ENCODE measurements at regions of chr4 and their contacts with region 1.

Region 1: DNA sequence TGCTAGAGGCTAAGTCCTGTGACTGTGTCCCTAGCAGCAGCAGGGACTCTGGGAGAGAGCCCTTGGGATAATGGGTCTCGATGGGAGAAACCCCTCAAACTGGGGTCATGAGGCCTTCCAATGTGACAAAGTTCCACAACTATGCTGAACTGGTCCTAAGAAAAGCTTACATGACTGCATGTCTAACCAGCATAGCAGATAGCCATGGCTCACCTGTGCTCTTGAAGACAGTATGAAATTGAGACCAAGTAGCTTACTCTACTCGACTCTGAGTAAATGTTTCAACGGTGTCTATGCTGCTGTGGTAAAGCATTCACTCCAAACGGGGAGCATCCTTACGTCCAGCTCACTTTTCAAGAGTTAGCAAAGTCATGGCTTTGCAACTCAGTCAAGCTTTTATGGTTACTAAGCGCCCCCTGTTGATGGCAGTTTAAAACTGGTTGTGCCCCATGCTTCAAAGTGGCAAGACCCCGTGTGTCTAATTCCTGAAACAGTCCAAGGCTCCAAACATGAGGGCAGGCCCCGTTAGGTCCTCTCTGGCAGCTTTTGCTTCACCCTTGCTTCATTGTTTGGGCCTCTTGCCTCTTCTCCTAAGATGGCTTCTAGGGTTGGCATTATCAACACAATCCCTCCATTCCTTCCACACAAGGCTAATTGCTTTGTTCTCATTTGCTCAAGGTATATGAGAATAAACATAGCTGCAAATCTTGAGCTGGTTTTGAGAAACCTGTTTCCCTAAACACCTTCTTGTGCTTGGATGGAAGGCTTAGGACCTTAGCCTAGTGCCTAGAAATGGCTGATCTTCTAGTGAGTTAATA is 46.6 kb downstream of the CCNG2 start:
- DNase-seq: peak; percentile 85
- ATAC-seq: peak; percentile 83
- H3K4me3 ChIP-seq: no peak overlapping the region
- H3K4me3 Mint-ChIP-seq: no peak overlapping the region
- H3K27ac ChIP-seq: no peak overlapping the region
- H3K27ac Mint-ChIP-seq: no peak overlapping the region
- H3K4me1 ChIP-seq: peaks cover 7% of the 10 kb centered on the region in 2 donors
- H3K4me1 Mint-ChIP-seq: peaks cover 9% of the 10 kb centered on the region
- H3K27me3 ChIP-seq: no peaks in the 10 kb centered on the region
- H3K27me3 Mint-ChIP-seq: no peaks in the 10 kb centered on the region
- CTCF ChIP-seq: peak; percentile 93

Region 2: DNA sequence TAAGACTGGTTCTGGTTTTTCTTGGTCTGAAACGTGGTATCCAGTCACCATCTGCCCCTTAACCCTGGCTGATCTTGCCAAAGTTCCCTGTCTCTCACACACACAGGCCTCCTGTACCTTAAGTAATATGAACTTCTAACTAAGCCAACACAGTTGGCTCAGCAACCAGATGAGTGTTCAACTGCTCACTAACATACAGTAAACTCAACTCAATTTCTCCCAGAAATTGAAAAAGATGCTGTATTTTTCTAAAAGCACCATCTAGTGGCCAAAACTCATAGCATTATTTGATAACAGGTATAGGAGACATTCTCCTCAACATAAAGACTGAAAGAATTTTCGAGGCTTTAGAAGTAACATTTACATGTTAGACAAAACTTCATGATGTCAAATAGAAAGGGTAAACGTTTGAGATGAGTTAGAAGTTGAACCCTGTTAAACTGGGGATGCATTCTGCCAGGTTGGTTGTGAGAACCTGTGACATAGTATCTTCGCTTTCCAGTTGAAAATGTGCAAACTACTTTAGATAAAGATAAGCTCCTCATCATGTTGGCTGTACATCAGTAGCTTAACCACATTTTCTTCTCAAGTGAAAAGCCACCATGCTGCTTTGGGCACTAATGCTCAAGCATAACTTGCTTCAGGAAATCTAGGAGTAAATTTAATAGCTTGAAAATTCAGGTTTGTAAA is 159.0 kb before region 1 on chr4:
- CTCF ChIA-PET with region 1: interaction called, 184 read pairs
- POLR2A ChIA-PET with region 1: no interaction called
- intact Hi-C with region 1: no loop called
- DNase-seq: peak; percentile 45
- ATAC-seq: no peak
- H3K4me3 ChIP-seq: no peak overlapping the region
- H3K4me3 Mint-ChIP-seq: no peak overlapping the region
- H3K27ac ChIP-seq: peak overlapping the region in 1 of 2 donors; percentile 22
- H3K27ac Mint-ChIP-seq: peak overlapping the region; percentile 23
- H3K4me1 ChIP-seq: peaks cover 11 to 12% of the 10 kb centered on the region in 2 donors
- H3K4me1 Mint-ChIP-seq: peaks cover 20% of the 10 kb centered on the region
- H3K27me3 ChIP-seq: no peaks in the 10 kb centered on the region
- H3K27me3 Mint-ChIP-seq: no peaks in the 10 kb centered on the region
- CTCF ChIP-seq: peak; percentile 68

Region 3: DNA sequence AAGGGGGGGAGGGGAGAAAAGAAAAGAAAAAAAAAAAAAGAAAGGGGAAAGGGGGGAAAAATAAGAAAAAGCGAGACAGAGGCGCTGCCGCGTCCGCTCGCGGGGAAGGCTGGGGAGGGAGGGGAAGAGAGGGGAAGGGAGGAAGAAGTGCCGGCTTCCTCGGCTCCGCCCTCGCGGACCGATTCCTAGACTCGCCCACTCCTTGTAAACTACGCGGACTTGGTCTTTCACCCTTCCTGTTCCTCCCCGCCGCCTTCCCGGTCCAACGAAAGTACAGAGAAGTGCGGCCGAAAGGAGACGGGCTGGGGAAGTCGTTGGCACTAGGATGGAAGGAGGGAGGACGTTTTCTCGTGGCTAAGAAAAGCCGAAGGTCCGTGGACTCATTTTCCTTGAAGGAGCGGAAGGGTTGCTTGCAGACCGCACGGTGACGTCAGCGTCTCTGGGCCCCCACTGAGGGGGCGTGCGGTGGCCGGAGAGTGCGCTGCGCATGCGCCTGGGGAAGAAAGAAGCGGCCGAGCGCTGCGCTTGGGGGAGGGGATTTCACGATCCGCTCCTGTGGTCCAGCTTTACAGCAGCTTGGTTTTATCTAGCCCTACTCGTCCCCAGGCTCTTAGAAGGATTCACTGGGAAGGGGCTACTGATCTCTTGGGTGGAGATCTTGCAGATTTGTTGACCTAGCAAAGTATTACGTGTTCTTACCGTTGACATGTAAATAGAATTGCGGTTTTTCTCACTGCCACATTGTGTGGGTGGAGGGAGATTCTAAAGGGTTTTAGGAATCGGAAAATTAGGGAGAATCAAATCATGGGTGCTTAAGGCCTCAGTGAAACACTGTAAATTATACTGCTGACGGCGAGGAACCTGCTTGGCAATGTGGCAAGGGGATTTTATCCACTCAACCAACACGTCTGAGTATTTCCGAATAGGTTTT is 127.5 kb before region 1 on chr4 and contains the start of gene CCNI:
- CTCF ChIA-PET with region 1: interaction called, 42 read pairs
- POLR2A ChIA-PET with region 1: interaction called, 3 read pairs
- intact Hi-C with region 1: no loop called
- DNase-seq: peak; percentile 100
- ATAC-seq: peak; percentile 75
- H3K4me3 ChIP-seq: peak within 1 kb of the TSS; percentile 68 to 98 (median 81)
- H3K4me3 Mint-ChIP-seq: no peak within 1 kb of the TSS
- H3K27ac ChIP-seq: peak within 1 kb of the TSS; percentile 97 to 100
- H3K27ac Mint-ChIP-seq: peak within 1 kb of the TSS; percentile 100
- H3K4me1 ChIP-seq: peaks cover 48 to 52% of the 10 kb centered on the region in 2 donors
- H3K4me1 Mint-ChIP-seq: peaks cover 46% of the 10 kb centered on the region
- H3K27me3 ChIP-seq: no peaks in the 10 kb centered on the region
- H3K27me3 Mint-ChIP-seq: no peaks in the 10 kb centered on the region
- CTCF ChIP-seq: no peak
- total RNA-seq, gene CCNI: 314 and 328 TPM in 2 replicates

Region 4: DNA sequence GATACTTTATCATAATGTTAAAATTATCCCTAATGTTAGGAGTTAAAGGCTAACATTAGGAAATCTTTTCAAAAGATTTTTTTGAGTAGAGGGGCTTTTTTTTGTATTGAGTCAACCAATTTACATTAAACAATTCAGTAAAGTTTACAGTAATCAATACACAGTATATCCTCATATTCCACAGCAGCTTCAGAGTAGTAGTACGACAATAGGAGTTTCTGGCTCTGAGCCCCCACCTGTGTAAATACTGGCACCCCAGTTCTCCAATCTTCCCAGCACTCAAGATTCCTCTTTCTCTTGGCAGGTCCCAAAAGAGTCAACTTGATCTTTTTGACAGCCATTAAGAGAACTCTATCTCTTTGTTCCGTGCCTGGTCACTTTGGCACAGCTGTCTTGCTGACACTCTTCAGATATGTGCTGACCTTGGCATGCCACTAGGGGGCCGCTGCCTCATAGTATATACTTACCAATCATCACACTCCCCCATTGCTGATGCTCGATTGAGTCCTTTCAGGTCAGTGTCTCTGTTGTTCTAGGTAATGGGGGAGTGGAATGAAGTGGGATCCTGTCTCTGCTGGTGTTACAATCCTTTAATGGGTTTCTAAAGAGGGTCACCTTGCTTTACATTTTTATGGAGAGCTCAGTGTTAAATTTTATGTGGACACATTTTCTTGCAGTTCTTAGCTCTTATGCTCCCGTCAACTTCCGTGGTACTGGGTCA is 108.3 kb before region 1 on chr4:
- CTCF ChIA-PET with region 1: interaction called, 444 read pairs
- POLR2A ChIA-PET with region 1: interaction called, 3 read pairs
- intact Hi-C with region 1: loop called (anchors 1 kb)
- DNase-seq: peak; percentile 81
- ATAC-seq: peak; percentile 99
- H3K4me3 ChIP-seq: no peak overlapping the region
- H3K4me3 Mint-ChIP-seq: no peak overlapping the region
- H3K27ac ChIP-seq: no peak overlapping the region
- H3K27ac Mint-ChIP-seq: no peak overlapping the region
- H3K4me1 ChIP-seq: peaks cover 21 to 25% of the 10 kb centered on the region in 2 donors
- H3K4me1 Mint-ChIP-seq: peaks cover 23% of the 10 kb centered on the region
- H3K27me3 ChIP-seq: no peaks in the 10 kb centered on the region
- H3K27me3 Mint-ChIP-seq: no peaks in the 10 kb centered on the region
- CTCF ChIP-seq: peak; percentile 95

Region 5: DNA sequence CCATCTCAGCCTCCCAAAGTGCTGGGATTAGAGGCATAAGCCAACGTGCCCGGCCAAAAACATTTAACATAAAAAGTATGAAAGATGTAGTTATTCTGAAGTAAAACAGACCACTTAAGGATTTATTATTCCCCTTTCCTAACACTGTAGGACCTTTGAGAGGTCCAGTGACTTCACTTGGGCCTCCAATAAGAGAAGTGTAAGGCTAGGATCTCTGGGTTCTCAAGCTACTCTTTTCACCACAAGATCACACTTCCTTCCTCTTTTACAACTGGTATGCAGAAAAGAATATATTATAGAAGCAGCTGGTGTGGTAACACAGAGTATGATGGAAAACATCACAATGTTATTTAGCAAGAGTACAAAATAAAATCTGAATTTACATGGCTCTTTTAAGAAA is 76.8 kb before region 1 on chr4:
- CTCF ChIA-PET with region 1: interaction called, 232 read pairs
- POLR2A ChIA-PET with region 1: no interaction called
- intact Hi-C with region 1: no loop called
- DNase-seq: peak; percentile 72
- ATAC-seq: peak; percentile 83
- H3K4me3 ChIP-seq: peak overlapping the region in 1 of 5 experiments; percentile 31
- H3K4me3 Mint-ChIP-seq: peak overlapping the region; percentile 59
- H3K27ac ChIP-seq: peak overlapping the region; percentile 81 to 90
- H3K27ac Mint-ChIP-seq: peak overlapping the region; percentile 96
- H3K4me1 ChIP-seq: peaks cover 52 to 66% of the 10 kb centered on the region in 2 donors
- H3K4me1 Mint-ChIP-seq: peaks cover 68% of the 10 kb centered on the region
- H3K27me3 ChIP-seq: no peaks in the 10 kb centered on the region
- H3K27me3 Mint-ChIP-seq: no peaks in the 10 kb centered on the region
- CTCF ChIP-seq: no peak

Region 6: GRCh38 chr4:77183777-77184420 is 19.7 kb before region 1 on chr4:
- CTCF ChIA-PET with region 1: interaction called, 27 read pairs
- POLR2A ChIA-PET with region 1: no interaction called
- intact Hi-C with region 1: no loop called
- DNase-seq: no peak
- ATAC-seq: no peak
- H3K4me3 ChIP-seq: no peak overlapping the region
- H3K4me3 Mint-ChIP-seq: no peak overlapping the region
- H3K27ac ChIP-seq: no peak overlapping the region
- H3K27ac Mint-ChIP-seq: no peak overlapping the region
- H3K4me1 ChIP-seq: peaks cover 0 to 6% of the 10 kb centered on the region in 2 donors
- H3K4me1 Mint-ChIP-seq: peaks cover 4% of the 10 kb centered on the region
- H3K27me3 ChIP-seq: no peaks in the 10 kb centered on the region
- H3K27me3 Mint-ChIP-seq: no peaks in the 10 kb centered on the region
- CTCF ChIP-seq: no peak

Region 7: DNA sequence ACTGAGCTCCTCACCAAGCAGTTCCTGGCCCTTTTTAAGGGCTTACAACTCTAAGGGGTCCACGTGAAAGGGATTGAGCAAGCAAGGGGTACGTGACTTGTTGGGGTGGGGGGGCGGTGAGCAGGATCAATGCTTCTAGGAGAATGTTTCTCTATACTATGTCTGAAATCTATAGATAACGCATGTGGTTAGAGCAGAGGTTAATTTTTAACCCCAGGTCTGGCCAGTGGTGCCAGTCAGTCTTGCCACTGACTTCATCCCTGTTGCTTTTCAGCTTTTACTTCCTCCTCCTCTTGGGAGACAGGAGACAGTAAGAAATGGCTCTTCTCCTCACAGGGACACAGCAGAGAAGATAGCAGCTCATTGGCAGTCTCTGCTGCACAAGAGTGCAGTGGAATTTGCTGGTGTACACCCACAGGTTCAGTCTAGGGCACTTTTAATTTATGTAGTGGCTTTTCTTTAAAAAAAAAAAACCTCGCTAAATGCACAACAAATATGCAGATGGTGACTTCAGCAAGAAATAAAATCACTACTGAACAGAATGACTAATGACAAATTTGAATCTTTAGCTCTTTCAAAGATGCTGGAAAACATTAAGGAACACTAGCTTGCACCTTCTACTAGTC is 143.9 kb after region 1 on chr4:
- CTCF ChIA-PET with region 1: no interaction called
- POLR2A ChIA-PET with region 1: no interaction called
- intact Hi-C with region 1: no loop called
- DNase-seq: no peak
- ATAC-seq: no peak
- H3K4me3 ChIP-seq: no peak overlapping the region
- H3K4me3 Mint-ChIP-seq: no peak overlapping the region
- H3K27ac ChIP-seq: no peak overlapping the region
- H3K27ac Mint-ChIP-seq: no peak overlapping the region
- H3K4me1 ChIP-seq: no peaks in the 10 kb centered on the region
- H3K4me1 Mint-ChIP-seq: no peaks in the 10 kb centered on the region
- H3K27me3 ChIP-seq: no peaks in the 10 kb centered on the region
- H3K27me3 Mint-ChIP-seq: peaks cover 9% of the 10 kb centered on the region
- CTCF ChIP-seq: no peak

Measured in B cell (primary cell).